ENCODE measurements at regions of chr9 and their contacts with region 1.

Region 1: DNA sequence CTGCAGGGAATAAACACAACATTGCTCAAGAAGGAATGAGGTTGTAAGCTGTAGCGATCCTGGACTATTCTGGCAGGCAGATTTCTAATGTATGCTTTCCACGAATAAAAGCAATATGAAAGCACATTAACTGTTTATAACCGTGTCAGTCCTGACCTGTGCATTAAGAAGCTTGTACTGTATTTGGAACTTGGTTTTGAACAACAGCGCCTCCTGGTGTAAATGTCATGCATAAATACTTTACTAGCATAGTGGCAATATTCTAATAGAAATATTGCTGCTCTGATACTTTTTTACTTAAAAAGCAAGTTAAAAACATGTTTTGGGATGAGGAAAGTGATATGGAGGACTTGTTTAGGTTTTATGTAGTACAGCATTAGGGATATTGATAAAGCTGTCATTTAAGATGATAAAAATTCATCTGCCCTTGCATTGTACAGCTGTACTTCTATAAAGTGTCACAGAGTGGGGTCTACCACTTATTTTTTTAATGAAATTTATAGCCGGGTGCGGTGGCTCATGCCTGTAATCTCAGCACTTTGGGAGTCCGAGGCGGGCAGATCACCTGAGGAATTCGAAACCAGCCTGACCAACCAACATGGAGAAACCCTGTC is 70.7 kb upstream of the GNE start:
- DNase-seq: no peak
- H3K4me3 ChIP-seq: no peak overlapping the region
- H3K27ac ChIP-seq: no peak overlapping the region
- H3K4me1 ChIP-seq: peaks cover 0 to 3% of the 10 kb centered on the region in 2 donors
- H3K27me3 ChIP-seq: no peaks in the 10 kb centered on the region
- CTCF ChIP-seq: peak; percentile 61 to 73 (median 65)

Region 2: GRCh38 chr9:35954942-35955546 is 373.9 kb before region 1 on chr9:
- intact Hi-C with region 1: loop called (anchors 10 kb)
- DNase-seq: peak in 1 of 2 donors; percentile 77
- H3K4me3 ChIP-seq: no peak overlapping the region
- H3K27ac ChIP-seq: no peak overlapping the region
- H3K4me1 ChIP-seq: no peaks in the 10 kb centered on the region
- H3K27me3 ChIP-seq: no peaks in the 10 kb centered on the region
- CTCF ChIP-seq: peak; percentile 67 to 87 (median 73)

Region 3: DNA sequence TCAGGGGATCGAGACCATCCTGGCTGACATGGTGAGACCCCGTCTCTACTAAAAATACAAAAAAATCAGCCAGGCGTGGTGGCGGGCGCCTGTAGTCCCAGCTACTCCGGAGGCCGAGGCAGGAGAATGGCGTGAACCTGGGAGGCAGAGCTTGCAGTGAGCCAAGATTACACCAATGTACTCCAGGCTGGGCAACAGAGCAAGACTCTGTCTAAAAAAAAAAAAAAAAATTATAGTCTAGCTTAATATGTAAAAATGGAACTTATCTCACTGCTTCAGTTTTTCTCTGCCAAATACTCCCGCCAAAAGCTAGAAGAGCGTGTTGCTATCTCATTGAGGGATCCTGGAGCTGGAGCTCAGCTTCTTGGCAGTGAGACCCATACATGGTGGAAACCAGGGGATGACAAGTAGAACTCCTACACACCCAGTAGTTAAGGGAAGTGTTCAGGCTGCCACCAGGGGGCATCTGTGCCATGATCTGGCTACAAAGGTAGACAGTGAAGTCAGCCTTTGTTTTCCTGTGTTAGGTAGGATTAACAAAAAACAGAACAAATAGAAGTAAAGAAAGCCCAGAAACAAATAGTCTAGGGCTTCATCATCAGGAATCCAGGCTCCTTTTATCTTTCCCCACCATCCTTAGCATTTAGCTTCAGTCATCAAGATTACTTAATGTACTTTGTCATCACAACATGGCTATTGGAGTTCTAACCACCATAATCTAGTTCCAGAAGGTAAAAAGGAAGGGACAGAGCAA is 226.0 kb before region 1 on chr9:
- intact Hi-C with region 1: loop called (anchors 10 kb)
- DNase-seq: peak; percentile 50 to 88
- H3K4me3 ChIP-seq: no peak overlapping the region
- H3K27ac ChIP-seq: peak overlapping the region; percentile 31 to 57
- H3K4me1 ChIP-seq: no peaks in the 10 kb centered on the region
- H3K27me3 ChIP-seq: no peaks in the 10 kb centered on the region
- CTCF ChIP-seq: peak; percentile 75 to 82 (median 79)

Region 4: DNA sequence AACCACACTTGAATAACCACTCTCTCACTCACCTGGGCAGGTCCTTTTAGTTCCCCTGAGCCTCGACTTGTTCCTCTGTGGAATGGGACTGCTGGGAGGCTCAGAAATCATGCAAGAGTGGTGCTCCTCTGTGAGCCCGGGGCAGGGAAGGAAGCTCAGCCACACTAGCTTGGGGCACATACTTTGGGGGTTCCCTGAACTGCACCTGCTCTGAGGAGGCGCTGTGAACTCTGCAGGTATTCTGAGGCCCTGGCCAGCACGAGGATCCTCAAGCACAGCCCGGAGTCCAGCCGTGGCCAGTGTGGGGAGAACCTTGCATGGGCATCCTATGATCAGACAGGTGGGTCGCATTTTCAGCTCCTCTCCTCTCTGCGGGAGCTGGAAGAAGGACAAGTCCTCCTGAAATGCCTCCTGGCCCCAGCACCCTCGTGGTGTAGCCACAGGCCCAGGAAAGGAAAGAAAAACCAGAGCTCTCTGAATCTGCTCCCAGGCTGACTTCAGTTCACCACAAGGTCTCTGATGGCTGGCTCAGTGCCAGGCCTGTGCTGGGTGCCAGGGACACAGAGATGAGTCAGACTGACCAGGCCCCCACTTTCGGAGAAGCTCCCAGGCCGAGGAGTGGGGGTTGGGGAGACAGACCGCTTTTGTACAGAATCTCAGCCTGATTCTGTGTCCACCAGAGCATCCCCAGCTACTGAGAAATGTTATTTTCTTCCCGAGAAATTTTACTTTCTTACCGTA is 180.4 kb before region 1 on chr9:
- intact Hi-C with region 1: no loop called
- DNase-seq: peak; percentile 95 to 99
- H3K4me3 ChIP-seq: peak overlapping the region in 1 of 2 donors; percentile 21
- H3K27ac ChIP-seq: peak overlapping the region; percentile 59 to 82
- H3K4me1 ChIP-seq: peaks cover 10 to 22% of the 10 kb centered on the region in 2 donors
- H3K27me3 ChIP-seq: no peaks in the 10 kb centered on the region
- CTCF ChIP-seq: no peak

Region 5: GRCh38 chr9:36190388-36191287 is 138.3 kb before region 1 on chr9 and contains the start of gene CLTA:
- intact Hi-C with region 1: loop called (anchors 10 kb)
- DNase-seq: peak; percentile 91 to 98
- H3K4me3 ChIP-seq: peak within 1 kb of the TSS; percentile 86 to 99
- H3K27ac ChIP-seq: peak within 1 kb of the TSS; percentile 94 to 95
- H3K4me1 ChIP-seq: peaks cover 4 to 31% of the 10 kb centered on the region in 2 donors
- H3K27me3 ChIP-seq: no peaks in the 10 kb centered on the region
- CTCF ChIP-seq: peak; percentile 43 to 63 (median 53)
- total RNA-seq, gene CLTA: 222 TPM

Region 6: DNA sequence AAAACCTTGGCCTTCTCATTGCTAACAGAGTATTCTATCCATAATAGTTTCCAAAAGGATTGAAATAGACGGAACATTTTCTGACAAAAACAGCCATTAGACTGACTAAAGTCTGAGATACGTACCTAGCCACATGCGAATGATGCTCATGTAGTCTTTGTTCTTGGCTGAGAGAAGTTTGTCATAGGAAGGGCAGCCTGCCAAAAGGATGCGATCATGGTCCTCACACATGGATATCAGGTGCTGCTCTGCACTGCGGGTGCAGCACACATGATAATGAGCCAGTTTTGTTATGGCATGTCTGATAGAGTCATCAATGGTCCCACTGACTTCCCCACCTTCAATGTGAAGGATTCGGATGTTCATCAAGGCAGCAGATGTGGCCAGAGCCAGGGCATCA is 83.0 kb before region 1 on chr9:
- intact Hi-C with region 1: loop called (anchors 10 kb)
- DNase-seq: no peak
- H3K4me3 ChIP-seq: no peak overlapping the region
- H3K27ac ChIP-seq: no peak overlapping the region
- H3K4me1 ChIP-seq: peaks cover 0 to 9% of the 10 kb centered on the region in 2 donors
- H3K27me3 ChIP-seq: no peaks in the 10 kb centered on the region
- CTCF ChIP-seq: no peak